T-cell (primary cell): ENCODE measurements at regions of chr6 and their contacts with region 1.

Region 1: DNA sequence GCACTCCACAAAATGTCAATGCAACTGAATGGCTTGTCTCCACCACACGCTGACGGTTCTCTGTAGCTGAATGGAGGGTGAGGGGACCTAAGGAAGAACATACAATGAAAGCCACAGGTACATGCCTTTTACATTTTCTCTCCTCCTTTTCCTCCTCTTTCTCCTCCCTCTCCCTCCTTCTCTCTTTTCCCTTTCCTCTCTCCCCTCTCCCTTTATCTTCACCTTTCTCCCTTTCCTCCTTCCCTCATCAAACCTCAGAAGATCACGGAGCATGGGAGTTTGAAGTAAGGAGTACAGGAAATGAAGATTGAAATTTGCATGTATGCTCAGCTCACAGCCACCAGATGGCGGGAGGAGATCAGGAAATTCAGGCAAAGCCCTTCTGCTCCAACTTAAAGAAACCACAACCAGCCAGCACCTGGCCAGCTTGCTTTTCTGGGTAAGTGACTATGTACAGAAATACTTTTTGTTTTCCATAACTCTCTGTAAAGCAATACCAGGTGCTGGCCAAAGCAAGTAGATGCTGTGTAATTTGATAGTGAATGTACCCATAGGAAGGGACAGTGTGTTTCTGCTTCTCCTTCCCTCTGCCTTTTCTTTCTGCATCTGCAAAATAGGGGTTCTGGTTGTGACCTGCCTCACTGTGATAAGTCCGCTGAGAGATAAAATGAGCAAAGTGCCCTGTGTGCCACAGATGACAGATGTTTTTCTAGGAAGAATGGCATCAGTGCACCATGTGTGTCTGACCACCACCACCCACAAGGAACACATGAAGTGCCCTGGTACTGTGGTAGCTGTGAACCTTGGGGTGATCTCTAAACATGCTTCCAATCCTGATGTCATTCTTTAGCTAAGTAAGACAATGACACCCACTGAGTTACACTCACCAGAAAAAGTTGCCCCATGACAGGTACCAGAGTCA is 18.6 kb upstream of the FOXO3 start:
- DNase-seq: peak; percentile 40 to 88 (median 63)
- ATAC-seq: peak; percentile 67 to 89 (median 80)
- H3K4me3 ChIP-seq: no peak overlapping the region
- H3K4me3 Mint-ChIP-seq: no peak overlapping the region
- H3K27ac ChIP-seq: no peak overlapping the region
- H3K27ac Mint-ChIP-seq: no peak overlapping the region
- H3K4me1 ChIP-seq: peaks cover 8 to 19% of the 10 kb centered on the region in 2 experiments
- H3K4me1 Mint-ChIP-seq: peaks cover 12 to 18% (median 16%) of the 10 kb centered on the region in 3 donors
- H3K27me3 ChIP-seq: peaks cover 0 to 3% of the 10 kb centered on the region in 2 experiments
- H3K27me3 Mint-ChIP-seq: peaks cover 0 to 8% of the 10 kb centered on the region in 2 donors

Region 2: DNA sequence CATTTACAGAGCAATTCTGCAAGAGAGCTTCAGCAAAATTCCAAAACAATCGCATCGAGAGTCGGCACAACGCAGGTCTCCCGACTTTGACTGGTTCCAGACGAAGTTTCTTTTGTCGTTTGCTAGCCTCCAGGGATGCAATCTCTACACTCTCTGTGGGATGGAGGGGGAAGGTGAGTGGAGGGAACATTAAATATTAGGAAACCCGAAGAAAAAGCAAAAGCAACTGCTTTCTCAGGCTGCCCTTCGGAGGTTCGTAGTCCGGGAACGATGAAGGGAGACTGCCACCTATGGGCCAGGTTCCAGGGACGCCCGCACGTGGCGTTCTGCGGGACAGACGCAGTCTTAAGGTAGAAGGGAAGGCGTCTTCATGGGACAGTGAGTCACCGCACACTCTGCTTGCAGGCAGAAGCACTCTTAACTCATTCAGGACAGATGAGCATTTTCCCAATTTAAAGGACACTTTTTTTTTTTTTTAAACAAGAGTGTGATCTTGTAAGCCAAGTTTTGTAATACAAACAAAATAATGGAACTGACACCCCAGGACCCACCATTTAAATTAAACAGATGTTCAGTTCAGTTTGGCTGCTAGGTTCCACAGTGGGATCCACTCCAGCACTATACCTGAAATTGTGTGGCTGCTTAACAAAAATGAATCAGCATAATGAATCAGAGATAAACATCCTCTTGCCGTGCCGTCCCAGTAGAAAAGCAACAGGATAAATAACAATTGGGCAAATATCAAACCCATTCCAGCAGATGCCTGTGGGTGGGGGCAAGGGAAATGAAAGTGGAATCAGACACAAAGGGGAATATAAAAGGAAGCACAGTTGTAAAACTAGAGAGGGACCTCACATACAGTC is 240.3 kb after region 1 on chr6:
- CTCF ChIA-PET with region 1: interaction called, 4 to 30 read pairs
- POLR2A ChIA-PET with region 1: no interaction called
- DNase-seq: peak; percentile 49 to 85 (median 72)
- ATAC-seq: peak; percentile 97 to 100 (median 100)
- H3K4me3 ChIP-seq: peak overlapping the region; percentile 38 to 50
- H3K4me3 Mint-ChIP-seq: peak overlapping the region; percentile 61 to 79 (median 78)
- H3K27ac ChIP-seq: no peak overlapping the region
- H3K27ac Mint-ChIP-seq: peak overlapping the region in 1 of 2 donors; percentile 40
- H3K4me1 ChIP-seq: peaks cover 0 to 9% of the 10 kb centered on the region in 2 experiments
- H3K4me1 Mint-ChIP-seq: peaks cover 0 to 11% (median 9%) of the 10 kb centered on the region in 3 donors
- H3K27me3 ChIP-seq: peaks cover 0 to 5% of the 10 kb centered on the region in 2 experiments
- H3K27me3 Mint-ChIP-seq: peaks cover 0 to 5% of the 10 kb centered on the region in 2 donors

Region 3: DNA sequence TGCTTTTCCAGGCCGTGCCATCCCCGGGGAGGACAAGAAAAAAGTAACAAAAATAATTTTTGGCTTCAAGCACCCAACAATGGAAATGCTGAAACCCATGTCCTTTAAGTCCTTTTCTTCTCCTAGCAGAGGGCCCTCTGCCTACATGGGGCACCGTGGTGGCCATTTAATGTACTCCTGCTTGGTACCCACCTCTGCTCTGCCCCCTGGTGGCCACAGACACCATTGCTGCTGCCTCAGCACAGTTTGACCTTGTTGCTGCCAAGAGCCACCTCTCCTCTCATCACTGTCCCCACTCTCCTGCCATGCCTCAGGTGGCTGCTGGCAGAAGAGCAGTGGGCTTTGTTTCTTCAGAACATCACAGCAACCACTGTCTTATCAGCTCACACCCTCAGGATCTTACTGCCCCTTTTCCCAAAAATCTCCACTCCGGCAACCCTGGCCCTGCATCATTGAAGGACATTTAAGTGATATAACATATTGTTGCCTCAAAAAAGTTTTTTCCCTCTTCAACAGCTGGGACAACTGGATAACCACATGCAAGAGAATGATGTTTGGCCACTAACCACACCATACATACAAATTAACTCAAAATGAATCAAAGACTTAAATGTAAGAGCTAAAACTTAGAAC is 293.2 kb after region 1 on chr6:
- CTCF ChIA-PET with region 1: interaction called, 5 to 10 read pairs
- POLR2A ChIA-PET with region 1: no interaction called
- DNase-seq: peak; percentile 57 to 91 (median 81)
- ATAC-seq: peak; percentile 95 to 99 (median 98)
- H3K4me3 ChIP-seq: no peak overlapping the region
- H3K4me3 Mint-ChIP-seq: no peak overlapping the region
- H3K27ac ChIP-seq: no peak overlapping the region
- H3K27ac Mint-ChIP-seq: peak overlapping the region; percentile 48 to 63
- H3K4me1 ChIP-seq: peaks cover 7 to 27% of the 10 kb centered on the region in 2 experiments
- H3K4me1 Mint-ChIP-seq: peaks cover 18 to 36% (median 20%) of the 10 kb centered on the region in 3 donors
- H3K27me3 ChIP-seq: no peaks in the 10 kb centered on the region
- H3K27me3 Mint-ChIP-seq: no peaks in the 10 kb centered on the region

Region 4: DNA sequence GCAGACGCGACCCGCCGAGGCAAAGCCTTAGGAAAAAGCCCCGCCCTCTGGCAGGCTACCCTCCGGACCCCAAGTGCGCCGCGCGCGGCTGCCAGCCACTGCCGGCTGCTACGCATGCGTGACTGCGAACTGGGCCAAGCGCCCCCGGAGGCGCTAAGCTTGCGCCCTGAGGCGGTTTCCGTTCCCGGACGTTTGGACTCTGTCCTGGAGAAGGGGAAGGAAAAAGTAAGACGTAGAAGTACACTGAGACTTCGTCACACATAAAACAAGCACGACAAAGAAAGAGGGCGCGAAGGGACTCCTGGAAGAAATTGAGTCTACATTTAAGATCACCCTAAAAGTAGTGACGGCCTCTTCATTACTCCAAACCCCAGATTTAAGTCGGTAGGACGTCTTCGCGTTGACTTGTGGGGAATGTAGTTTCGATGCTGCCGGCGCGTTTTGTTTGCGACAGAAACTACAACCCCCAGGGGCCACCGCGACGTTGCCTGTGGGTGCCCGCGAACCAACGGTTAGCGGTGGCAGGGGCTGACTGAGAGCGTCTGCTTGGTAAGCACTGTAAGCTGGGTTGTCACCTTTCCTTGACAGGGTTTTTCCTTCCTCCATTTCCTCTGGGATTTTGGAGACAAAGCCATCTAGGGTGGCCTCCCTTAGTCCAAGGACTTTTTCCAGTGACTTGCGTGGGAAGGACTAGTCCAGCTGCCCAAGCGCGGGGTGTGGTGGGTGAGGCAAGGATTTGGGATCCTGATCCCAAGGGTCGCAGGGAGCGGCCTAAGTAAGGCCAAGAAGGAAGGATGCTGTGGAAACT is 553.1 kb after region 1 on chr6 and contains the start of gene CEP57L1:
- CTCF ChIA-PET with region 1: interaction called in 1 of 2 experiments, 12 read pairs
- POLR2A ChIA-PET with region 1: no interaction called
- DNase-seq: peak; percentile 84 to 97 (median 94)
- ATAC-seq: peak; percentile 76 to 83 (median 80)
- H3K4me3 ChIP-seq: peak within 1 kb of the TSS; percentile 83 to 93
- H3K4me3 Mint-ChIP-seq: peak within 1 kb of the TSS; percentile 89 to 93 (median 90)
- H3K27ac ChIP-seq: peak within 1 kb of the TSS; percentile 98
- H3K27ac Mint-ChIP-seq: peak within 1 kb of the TSS; percentile 99
- H3K4me1 ChIP-seq: peaks cover 8 to 28% of the 10 kb centered on the region in 2 experiments
- H3K4me1 Mint-ChIP-seq: peaks cover 49 to 59% (median 55%) of the 10 kb centered on the region in 3 donors
- H3K27me3 ChIP-seq: no peaks in the 10 kb centered on the region
- H3K27me3 Mint-ChIP-seq: no peaks in the 10 kb centered on the region
- total RNA-seq, gene CEP57L1: 5.2 to 7.9 (median 5.9) TPM